ENCODE measurements at regions of chr19 and their contacts with region 1.

Region 1: DNA sequence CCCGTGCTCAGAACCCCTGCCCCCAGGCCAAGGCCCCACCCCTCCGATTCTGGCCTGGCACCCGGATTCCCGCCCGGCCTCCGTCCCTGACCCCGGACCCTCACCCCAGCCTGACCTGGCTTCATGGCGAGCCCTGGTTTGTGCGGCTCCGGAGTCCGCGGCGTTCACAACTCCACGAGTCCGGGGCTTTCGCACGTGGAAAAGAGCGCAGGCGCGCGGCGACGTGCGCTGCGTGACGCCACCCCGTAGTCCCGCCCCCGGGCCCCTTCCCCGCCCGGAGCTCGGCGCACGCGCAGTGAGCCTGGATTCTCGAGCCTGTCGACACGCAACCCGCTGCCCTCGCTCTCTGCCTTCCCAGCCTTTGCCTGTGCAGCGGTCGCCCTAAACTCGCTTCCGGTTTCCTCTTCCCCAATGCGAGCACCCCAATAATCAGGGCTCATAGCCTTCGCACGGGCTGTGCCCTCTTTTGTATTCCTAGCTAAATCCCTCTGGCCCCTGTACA is at the start of gene FBL:
- DNase-seq: peak; percentile 85
- ATAC-seq: peak; percentile 89
- H3K4me3 ChIP-seq: peak within 1 kb of the TSS; percentile 85
- H3K27ac ChIP-seq: peak within 1 kb of the TSS; percentile 85
- H3K4me1 ChIP-seq: peaks cover 19% of the 10 kb centered on the region
- H3K27me3 ChIP-seq: no peaks in the 10 kb centered on the region
- CTCF ChIP-seq: no peak
- POLR2A ChIP-seq: peak; percentile 59
- RAD21 ChIP-seq: no peak
- total RNA-seq, gene FBL: 211 and 259 TPM in 2 replicates

Region 2: DNA sequence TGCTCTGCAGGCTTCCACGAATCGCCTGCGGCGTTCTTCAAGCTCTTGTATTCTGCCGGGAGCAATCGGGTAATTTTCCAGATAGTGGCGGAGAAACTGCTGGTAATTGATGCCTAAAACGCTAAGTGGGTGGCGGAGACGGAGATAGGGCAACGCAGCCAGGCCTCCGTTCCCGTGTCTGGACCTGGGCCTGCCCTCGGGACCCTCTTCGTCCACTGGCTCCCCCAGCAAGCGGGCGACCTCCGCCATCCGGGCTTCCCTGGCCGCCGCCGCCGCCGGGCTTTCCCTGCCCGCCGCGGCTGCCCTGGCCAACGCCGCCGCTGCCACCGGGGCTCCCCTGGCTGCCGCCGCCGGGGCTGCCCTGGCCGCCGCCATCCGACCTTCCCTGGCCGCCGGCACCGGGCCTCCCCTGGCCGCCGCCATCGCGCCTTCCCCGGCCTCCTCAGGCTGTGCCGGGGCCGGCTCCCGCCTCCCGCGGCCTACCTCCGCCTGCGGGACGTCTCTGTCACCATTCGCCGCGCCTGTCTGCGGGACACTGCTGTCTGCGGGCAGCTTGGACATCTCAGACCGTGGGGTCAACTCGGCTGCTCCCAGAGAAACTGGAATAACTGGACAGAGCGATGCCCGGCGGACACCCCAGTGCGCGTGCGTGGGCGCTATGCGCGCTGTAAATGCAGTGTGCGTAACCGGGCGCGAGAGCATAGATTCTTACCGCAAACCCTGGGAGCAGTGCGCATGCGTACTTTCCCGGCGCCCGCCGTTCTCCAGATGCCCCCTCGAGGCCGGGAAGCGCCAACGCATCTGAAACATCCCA is 306.5 kb before region 1 on chr19 and contains the start of gene EID2:
- CTCF ChIA-PET with region 1: no interaction called
- POLR2A ChIA-PET with region 1: no interaction called
- dilution Hi-C with region 1: no loop called
- in situ Hi-C with region 1: loop called (anchors 10 kb)
- intact Hi-C with region 1: no loop called
- DNase-seq: peak; percentile 93
- ATAC-seq: peak; percentile 95
- H3K4me3 ChIP-seq: peak within 1 kb of the TSS; percentile 89
- H3K27ac ChIP-seq: peak within 1 kb of the TSS; percentile 95
- H3K4me1 ChIP-seq: no peaks in the 10 kb centered on the region
- H3K27me3 ChIP-seq: no peaks in the 10 kb centered on the region
- CTCF ChIP-seq: peak; percentile 85
- POLR2A ChIP-seq: peak; percentile 73
- RAD21 ChIP-seq: peak; percentile 50
- total RNA-seq, gene EID2: 5.7 and 6.9 TPM in 2 replicates

Region 3: DNA sequence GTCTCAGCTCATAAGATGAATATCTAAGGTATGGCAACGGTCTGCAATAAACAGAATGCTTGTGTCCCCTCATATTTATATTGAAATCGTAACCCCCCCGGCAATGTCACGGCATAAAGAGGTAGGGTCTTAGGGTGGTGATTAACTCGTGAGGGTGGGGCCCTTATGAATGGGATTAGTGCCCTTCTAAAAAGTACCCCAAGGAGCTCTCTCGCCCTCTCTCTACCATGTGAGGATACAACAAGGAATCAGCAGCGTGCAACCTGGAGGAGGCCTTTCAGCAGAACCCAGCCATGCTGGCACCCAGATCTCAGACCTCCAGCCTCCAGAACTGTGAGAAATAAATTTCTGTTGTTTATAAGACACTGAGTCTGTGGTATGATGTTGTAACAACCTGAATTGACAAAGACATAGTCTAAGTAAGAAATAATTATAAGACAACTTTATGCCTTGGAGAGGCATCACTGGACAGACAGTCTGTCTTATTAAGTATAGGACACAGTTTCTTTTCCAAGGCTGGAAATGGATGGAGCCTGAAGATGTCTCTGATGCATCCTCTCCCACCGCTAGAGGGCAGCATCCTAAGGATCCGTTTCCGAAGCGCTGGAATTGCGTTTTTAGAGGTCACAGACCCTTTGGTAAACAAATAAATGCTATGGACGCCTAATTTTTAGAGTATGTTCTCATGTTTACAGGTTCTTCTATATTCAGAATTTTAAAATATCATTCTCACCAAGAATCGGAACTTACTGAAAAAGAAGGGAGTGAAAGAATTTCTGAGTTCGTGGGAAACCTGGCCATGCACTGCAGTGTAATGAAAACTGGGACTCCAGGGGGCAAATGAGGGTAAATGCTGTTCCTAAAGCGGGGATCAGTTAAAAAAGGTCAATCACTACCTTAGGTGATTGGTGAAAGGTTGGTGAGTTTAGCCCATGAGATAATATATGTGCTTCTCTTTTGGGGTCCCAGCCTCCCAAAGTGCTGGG is 80.8 kb before region 1 on chr19:
- CTCF ChIA-PET with region 1: interaction called, 5 read pairs
- POLR2A ChIA-PET with region 1: interaction called, 3 read pairs
- dilution Hi-C with region 1: no loop called
- in situ Hi-C with region 1: no loop called
- intact Hi-C with region 1: loop called (anchors 1 kb)
- DNase-seq: peak; percentile 41
- ATAC-seq: peak; percentile 53
- H3K4me3 ChIP-seq: no peak overlapping the region
- H3K27ac ChIP-seq: no peak overlapping the region
- H3K4me1 ChIP-seq: no peaks in the 10 kb centered on the region
- H3K27me3 ChIP-seq: no peaks in the 10 kb centered on the region; the same call in 1 of the 2 replicates
- CTCF ChIP-seq: peak; percentile 66
- POLR2A ChIP-seq: no peak
- RAD21 ChIP-seq: 0 out of 2 replicates have a peak, but pooled peaks have one; percentile 16

Region 4: GRCh38 chr19:39970675-39971379 is 124.6 kb after region 1 on chr19 and contains the start of gene PSMC4:
- CTCF ChIA-PET with region 1: interaction called, 4 read pairs
- POLR2A ChIA-PET with region 1: no interaction called
- dilution Hi-C with region 1: no loop called
- in situ Hi-C with region 1: no loop called
- intact Hi-C with region 1: loop called (anchors 2 kb)
- DNase-seq: peak; percentile 99
- ATAC-seq: peak; percentile 99
- H3K4me3 ChIP-seq: peak within 1 kb of the TSS; percentile 62
- H3K27ac ChIP-seq: peak within 1 kb of the TSS; percentile 66
- H3K4me1 ChIP-seq: peaks cover 2% of the 10 kb centered on the region; the same call in 1 of the 2 replicates
- H3K27me3 ChIP-seq: no peaks in the 10 kb centered on the region
- CTCF ChIP-seq: peak; percentile 84
- POLR2A ChIP-seq: peak; percentile 95
- RAD21 ChIP-seq: peak; percentile 71
- total RNA-seq, gene PSMC4: 213 and 216 TPM in 2 replicates

Measured in IMR-90 (cell line).